Activated naive CD4-positive, alpha-beta T cell treated with anti-CD3 and anti-CD28 coated beads for 36 hours (primary cell): ENCODE measurements at regions of chrX and their contacts with region 1.

Region 1: DNA sequence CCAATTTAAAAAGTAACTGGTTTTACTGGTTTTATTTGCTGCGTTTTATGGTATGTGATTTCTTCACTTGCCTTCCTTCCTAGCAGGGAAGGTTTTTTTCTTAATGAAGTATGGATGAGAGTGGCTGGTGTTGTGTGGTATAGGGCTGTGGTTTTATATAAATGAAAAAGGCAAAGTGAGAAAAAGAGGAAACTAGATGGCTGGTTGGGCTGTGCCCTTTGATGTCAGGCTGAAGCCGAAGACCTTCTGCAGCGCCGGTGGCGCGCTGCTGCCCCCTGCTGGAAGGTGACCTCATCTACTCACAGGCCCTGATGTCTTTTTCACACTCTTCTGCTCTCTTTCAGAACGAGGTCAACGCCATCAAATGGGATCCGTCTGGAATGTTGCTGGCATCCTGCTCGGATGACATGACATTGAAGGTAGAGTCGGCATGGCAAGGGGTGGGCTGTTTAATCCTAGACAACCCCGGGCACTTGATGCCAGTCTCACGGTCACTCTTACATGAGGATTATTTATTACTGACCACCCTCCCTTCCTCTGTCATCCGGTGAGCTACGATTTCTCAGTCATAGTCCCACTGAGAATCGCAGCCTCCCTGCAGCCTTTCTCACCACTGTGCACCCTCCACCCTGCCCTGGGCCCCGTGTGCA is 56.6 kb downstream of the GPR143 start:
- DNase-seq: peak; percentile 78
- H3K4me3 Mint-ChIP-seq: no peak overlapping the region
- H3K27ac Mint-ChIP-seq: no peak overlapping the region
- H3K4me1 Mint-ChIP-seq: peaks cover 7% of the 10 kb centered on the region
- H3K27me3 Mint-ChIP-seq: no peaks in the 10 kb centered on the region

Region 2: GRCh38 chrX:8815464-8816065 is 893.5 kb before region 1 on chrX:
- CTCF ChIA-PET with region 1: interaction called, 3 read pairs
- intact Hi-C with region 1: loop called (anchors 1 kb)
- DNase-seq: peak; percentile 8
- H3K4me3 Mint-ChIP-seq: no peak overlapping the region
- H3K27ac Mint-ChIP-seq: no peak overlapping the region
- H3K4me1 Mint-ChIP-seq: no peaks in the 10 kb centered on the region
- H3K27me3 Mint-ChIP-seq: no peaks in the 10 kb centered on the region

Region 3: DNA sequence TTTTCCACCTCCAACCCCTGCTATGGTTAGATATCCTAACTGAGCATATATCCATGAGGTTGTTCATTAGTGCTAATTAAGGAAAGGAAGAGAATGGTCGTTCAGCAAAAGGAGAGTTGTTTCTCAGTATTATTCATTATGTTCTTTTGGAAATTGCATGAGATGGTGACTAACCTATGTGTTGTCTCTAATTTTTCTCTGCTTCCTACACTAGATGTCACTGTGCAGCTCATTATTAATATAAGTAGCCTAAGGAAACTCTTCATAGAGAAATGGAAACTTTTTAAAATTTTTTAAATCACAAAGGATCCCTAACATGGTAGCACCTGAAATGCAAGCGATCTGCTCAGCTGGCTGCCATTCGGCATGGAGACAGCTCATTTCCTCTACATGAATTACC is 840.1 kb before region 1 on chrX:
- CTCF ChIA-PET with region 1: no interaction called
- intact Hi-C with region 1: loop called (anchors 5 kb)
- DNase-seq: no peak
- H3K4me3 Mint-ChIP-seq: no peak overlapping the region
- H3K27ac Mint-ChIP-seq: no peak overlapping the region
- H3K4me1 Mint-ChIP-seq: no peaks in the 10 kb centered on the region
- H3K27me3 Mint-ChIP-seq: peaks cover 5% of the 10 kb centered on the region

Region 4: DNA sequence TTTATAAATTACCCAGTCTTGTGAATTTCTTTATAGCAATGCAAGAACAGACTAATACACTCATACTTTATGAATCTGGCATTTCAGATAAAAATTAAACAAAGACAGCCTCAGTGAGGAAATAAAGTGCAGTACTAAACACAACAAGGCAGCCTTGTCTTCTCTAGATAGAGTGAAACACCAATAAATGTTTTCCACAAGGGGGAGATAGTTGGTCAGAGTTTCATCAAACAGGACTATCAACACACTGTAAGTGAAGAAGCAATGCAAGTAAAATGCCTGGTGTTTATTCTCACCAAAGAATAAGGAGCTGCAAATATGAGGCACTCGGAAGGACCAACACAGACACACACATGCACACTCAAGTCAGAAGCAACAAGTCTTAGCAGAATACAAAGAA is 737.9 kb before region 1 on chrX:
- CTCF ChIA-PET with region 1: no interaction called
- intact Hi-C with region 1: loop called (anchors 1 kb)
- DNase-seq: no peak
- H3K4me3 Mint-ChIP-seq: no peak overlapping the region
- H3K27ac Mint-ChIP-seq: no peak overlapping the region
- H3K4me1 Mint-ChIP-seq: no peaks in the 10 kb centered on the region
- H3K27me3 Mint-ChIP-seq: no peaks in the 10 kb centered on the region

Region 5: DNA sequence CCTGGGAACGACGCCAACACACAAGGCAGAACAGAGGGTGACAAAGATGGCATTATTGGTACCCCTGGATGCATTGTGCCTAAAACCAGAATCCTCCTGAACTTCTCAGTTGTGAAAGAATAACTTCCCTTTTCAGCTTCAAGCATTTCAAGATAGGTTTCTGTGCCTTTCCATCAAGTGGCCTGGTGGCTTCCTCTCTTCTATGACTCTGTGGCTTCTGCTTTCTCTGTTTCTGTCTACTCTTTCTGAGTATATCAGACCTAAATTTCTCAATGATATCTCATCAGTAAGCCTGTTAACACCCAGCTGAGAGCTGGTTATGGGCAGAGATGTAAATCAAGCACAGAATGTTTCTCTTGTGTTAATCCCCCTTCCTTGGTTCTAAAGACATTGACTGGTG is 653.7 kb before region 1 on chrX:
- CTCF ChIA-PET with region 1: no interaction called
- intact Hi-C with region 1: loop called (anchors 10 kb)
- DNase-seq: no peak
- H3K4me3 Mint-ChIP-seq: no peak overlapping the region
- H3K27ac Mint-ChIP-seq: no peak overlapping the region
- H3K4me1 Mint-ChIP-seq: no peaks in the 10 kb centered on the region
- H3K27me3 Mint-ChIP-seq: no peaks in the 10 kb centered on the region

Region 6: GRCh38 chrX:9312922-9313867 is 395.8 kb before region 1 on chrX:
- CTCF ChIA-PET with region 1: interaction called, 4 read pairs
- intact Hi-C with region 1: loop called (anchors 1 kb)
- DNase-seq: peak; percentile 82
- H3K4me3 Mint-ChIP-seq: no peak overlapping the region
- H3K27ac Mint-ChIP-seq: no peak overlapping the region
- H3K4me1 Mint-ChIP-seq: peaks cover 11% of the 10 kb centered on the region
- H3K27me3 Mint-ChIP-seq: no peaks in the 10 kb centered on the region

Region 7: DNA sequence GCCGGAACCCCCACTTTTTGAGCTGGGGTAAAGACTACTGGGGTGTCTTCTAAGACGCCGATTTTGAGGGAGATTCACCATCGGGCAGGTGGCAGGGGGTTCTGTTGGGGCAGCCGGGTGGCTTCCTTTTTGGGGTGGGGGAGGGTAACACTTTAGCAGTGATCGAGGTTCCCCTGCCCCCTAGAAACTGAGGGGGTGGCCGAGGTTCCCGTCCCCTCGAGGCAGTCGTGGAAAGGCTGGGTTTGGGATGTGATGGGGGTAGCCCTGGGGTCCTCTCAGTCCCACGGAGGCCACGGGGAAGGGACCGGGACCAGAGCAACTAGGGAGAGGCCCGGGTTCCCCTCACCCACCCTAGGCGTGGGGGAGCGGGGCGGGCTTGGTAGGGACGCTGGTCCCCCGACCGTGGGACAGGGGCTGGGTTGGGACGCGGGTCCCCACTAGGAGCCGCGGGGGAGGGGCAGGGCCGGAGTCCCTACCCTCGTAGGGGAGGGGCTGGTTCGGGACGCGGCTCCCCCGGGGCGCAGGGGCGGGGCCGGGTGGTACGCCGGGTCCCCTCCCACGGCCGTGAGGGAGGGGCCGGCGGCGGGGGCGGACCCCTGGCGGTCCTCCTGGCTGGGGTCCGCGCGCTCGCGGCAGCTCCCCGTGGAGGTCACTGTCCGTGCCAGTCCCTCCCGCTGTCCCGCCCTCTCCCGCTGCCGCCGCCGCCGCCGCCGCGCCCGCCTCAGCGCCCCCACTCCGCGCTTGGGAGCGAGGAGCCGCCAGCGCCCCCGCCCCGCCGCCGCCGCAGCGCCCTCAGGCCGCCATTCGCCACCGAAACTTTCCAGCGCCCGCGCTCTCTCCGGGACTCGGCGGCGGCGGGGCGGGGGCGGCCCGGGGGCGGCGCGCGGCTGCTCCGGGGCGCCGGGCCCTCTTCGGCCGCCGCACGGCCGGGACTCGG is 244.3 kb before region 1 on chrX and contains the start of gene TBL1X:
- CTCF ChIA-PET with region 1: no interaction called
- intact Hi-C with region 1: loop called (anchors 2 kb)
- DNase-seq: peak; percentile 29
- H3K4me3 Mint-ChIP-seq: peak within 1 kb of the TSS; percentile 74
- H3K27ac Mint-ChIP-seq: peak within 1 kb of the TSS; percentile 82
- H3K4me1 Mint-ChIP-seq: peaks cover 40% of the 10 kb centered on the region
- H3K27me3 Mint-ChIP-seq: no peaks in the 10 kb centered on the region
- total RNA-seq, gene TBL1X: 20.7 to 21.6 TPM